Naive thymus-derived CD4-positive, alpha-beta T cell (primary cell): ENCODE measurements at regions of chr1 and their contacts with region 1.

Region 1: GRCh38 chr1:197526736-197527371 is 248.4 kb downstream of the DENND1B start:
- DNase-seq: peak in 6 of 9 donors; percentile 9 to 53 (median 37)
- ATAC-seq: peak; percentile 69
- H3K4me3 ChIP-seq: no peak overlapping the region
- H3K4me3 Mint-ChIP-seq: no peak overlapping the region
- H3K27ac ChIP-seq: no peak overlapping the region
- H3K27ac Mint-ChIP-seq: no peak overlapping the region
- H3K4me1 ChIP-seq: no peaks in the 10 kb centered on the region
- H3K4me1 Mint-ChIP-seq: no peaks in the 10 kb centered on the region
- H3K27me3 ChIP-seq: no peaks in the 10 kb centered on the region
- H3K27me3 Mint-ChIP-seq: no peaks in the 10 kb centered on the region

Region 2: GRCh38 chr1:197399755-197400527 is 126.9 kb before region 1 on chr1:
- CTCF ChIA-PET with region 1: no interaction called
- POLR2A ChIA-PET with region 1: no interaction called
- intact Hi-C with region 1: loop called in 1 of 2 experiments (anchors 5 kb)
- DNase-seq: peak in 6 of 9 donors; percentile 14 to 51 (median 34)
- ATAC-seq: peak; percentile 88
- H3K4me3 ChIP-seq: no peak overlapping the region
- H3K4me3 Mint-ChIP-seq: peak overlapping the region in 2 of 10 donors; percentile 54 to 64
- H3K27ac ChIP-seq: no peak overlapping the region
- H3K27ac Mint-ChIP-seq: peak overlapping the region in 1 of 9 donors; percentile 28
- H3K4me1 ChIP-seq: no peaks in the 10 kb centered on the region
- H3K4me1 Mint-ChIP-seq: peaks cover 0 to 3% (median 0%) of the 10 kb centered on the region in 7 donors
- H3K27me3 ChIP-seq: no peaks in the 10 kb centered on the region
- H3K27me3 Mint-ChIP-seq: peaks cover 5 to 22% (median 8%) of the 10 kb centered on the region in 5 donors

Region 3: DNA sequence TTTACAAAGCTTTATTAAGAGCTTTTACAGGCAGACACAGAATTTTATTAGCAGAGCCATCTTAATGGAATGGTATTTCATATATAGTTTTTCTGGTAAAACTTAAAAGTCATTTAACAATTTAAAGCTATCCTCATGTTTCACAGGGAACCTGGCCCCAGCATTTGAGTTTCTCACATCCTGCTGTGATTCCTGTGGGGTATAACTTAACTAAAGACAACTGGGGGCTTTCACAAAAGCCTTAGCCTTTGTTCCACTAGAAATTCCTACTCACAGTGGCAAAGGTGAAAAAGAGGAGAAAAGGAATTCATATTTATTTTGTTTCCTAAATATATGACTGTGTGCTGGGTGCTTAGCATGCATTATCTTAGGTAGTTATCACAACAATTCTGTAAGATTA is 14.6 kb after region 1 on chr1:
- CTCF ChIA-PET with region 1: interaction called, 11 read pairs
- POLR2A ChIA-PET with region 1: no interaction called
- intact Hi-C with region 1: no loop called
- DNase-seq: no peak
- ATAC-seq: no peak
- H3K4me3 ChIP-seq: no peak overlapping the region
- H3K4me3 Mint-ChIP-seq: no peak overlapping the region
- H3K27ac ChIP-seq: no peak overlapping the region
- H3K27ac Mint-ChIP-seq: no peak overlapping the region
- H3K4me1 ChIP-seq: no peaks in the 10 kb centered on the region
- H3K4me1 Mint-ChIP-seq: peaks cover 0 to 6% (median 0%) of the 10 kb centered on the region in 7 donors
- H3K27me3 ChIP-seq: no peaks in the 10 kb centered on the region
- H3K27me3 Mint-ChIP-seq: no peaks in the 10 kb centered on the region

Region 4: DNA sequence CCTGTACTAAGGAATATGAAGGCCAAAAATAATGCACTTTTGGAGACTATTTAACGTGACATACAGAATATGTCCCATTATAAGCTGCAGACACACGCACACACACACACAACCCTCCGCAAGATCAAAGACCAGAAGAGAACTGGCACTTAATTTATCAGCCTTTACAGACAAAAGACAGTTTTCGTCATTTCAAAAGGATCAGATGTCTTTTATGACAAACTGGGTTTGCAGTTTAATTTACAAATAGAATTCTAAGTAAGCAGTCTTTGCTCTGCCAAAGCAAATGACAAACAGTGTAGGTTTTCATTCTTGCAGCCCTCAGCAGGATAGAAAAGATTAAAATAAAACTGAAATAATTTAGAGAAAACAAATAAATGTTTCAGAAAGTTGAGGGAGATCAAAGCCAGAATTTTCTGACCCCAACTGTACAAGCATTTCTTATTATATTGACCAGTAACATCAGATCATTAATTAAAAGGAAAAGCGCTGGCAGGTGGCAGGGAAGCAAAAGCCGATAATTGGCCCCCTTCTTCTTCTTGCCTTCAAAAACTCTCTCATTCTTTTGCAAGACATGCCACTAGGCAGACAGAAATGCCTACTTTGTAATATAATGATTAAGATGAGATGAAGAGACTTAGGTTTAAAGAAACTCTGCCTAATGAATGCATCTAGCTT is 79.5 kb after region 1 on chr1:
- CTCF ChIA-PET with region 1: no interaction called
- POLR2A ChIA-PET with region 1: no interaction called
- intact Hi-C with region 1: loop called in 1 of 2 experiments (anchors 5 kb)
- DNase-seq: no peak
- ATAC-seq: no peak
- H3K4me3 ChIP-seq: no peak overlapping the region
- H3K4me3 Mint-ChIP-seq: no peak overlapping the region
- H3K27ac ChIP-seq: no peak overlapping the region
- H3K27ac Mint-ChIP-seq: no peak overlapping the region
- H3K4me1 ChIP-seq: no peaks in the 10 kb centered on the region
- H3K4me1 Mint-ChIP-seq: no peaks in the 10 kb centered on the region
- H3K27me3 ChIP-seq: no peaks in the 10 kb centered on the region
- H3K27me3 Mint-ChIP-seq: no peaks in the 10 kb centered on the region

Region 5: GRCh38 chr1:198359024-198359653 is 832.3 kb after region 1 on chr1:
- CTCF ChIA-PET with region 1: no interaction called
- POLR2A ChIA-PET with region 1: no interaction called
- intact Hi-C with region 1: loop called in 1 of 2 experiments (anchors 5 kb)
- DNase-seq: peak in 5 of 9 donors; percentile 3 to 17 (median 7)
- ATAC-seq: no peak
- H3K4me3 ChIP-seq: no peak overlapping the region
- H3K4me3 Mint-ChIP-seq: no peak overlapping the region
- H3K27ac ChIP-seq: no peak overlapping the region
- H3K27ac Mint-ChIP-seq: no peak overlapping the region
- H3K4me1 ChIP-seq: no peaks in the 10 kb centered on the region
- H3K4me1 Mint-ChIP-seq: peaks cover 0 to 3% (median 0%) of the 10 kb centered on the region in 7 donors
- H3K27me3 ChIP-seq: no peaks in the 10 kb centered on the region
- H3K27me3 Mint-ChIP-seq: peaks cover 0 to 21% (median 3%) of the 10 kb centered on the region in 5 donors